Activated T-helper 1 cell treated with anti-CD3 and anti-CD28 coated beads, Interleukin-12 subunit alpha, Interleukin-12 subunit beta, Interleukin-2, Interleukin-4 antibody, amounts not matched to agents 30 ng/mL and 10 ng/mL and 1 ng/mL, durations not matched to agents 14 hours and 24 hours and 36 hours (primary cell): ENCODE measurements at regions of chr16 and their contacts with region 1.

Region 1: DNA sequence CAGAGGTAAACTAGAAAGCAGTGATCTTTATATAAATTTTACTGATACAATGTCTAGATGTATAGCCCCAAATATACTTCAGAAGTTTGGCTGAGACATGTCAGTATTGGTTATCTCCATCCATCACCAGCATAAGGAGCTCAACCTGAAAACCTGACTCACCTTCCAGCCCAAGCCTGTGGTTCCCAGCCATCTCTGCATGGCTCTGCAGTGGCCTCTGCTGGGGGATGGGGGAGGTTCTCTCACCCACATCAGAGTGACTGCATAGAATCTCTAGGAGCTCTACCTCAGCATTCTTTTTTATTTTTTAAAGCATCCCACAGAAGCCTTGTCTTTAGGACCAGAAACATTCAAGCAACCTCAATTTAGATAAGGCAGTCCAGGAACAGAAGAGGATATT is 27.3 kb downstream of the USP7 start:
- DNase-seq: peak; percentile 60
- H3K4me3 Mint-ChIP-seq: no peak overlapping the region
- H3K27ac Mint-ChIP-seq: peak overlapping the region; percentile 41
- H3K4me1 Mint-ChIP-seq: peaks cover 36% of the 10 kb centered on the region
- H3K27me3 Mint-ChIP-seq: no peaks in the 10 kb centered on the region

Region 2: DNA sequence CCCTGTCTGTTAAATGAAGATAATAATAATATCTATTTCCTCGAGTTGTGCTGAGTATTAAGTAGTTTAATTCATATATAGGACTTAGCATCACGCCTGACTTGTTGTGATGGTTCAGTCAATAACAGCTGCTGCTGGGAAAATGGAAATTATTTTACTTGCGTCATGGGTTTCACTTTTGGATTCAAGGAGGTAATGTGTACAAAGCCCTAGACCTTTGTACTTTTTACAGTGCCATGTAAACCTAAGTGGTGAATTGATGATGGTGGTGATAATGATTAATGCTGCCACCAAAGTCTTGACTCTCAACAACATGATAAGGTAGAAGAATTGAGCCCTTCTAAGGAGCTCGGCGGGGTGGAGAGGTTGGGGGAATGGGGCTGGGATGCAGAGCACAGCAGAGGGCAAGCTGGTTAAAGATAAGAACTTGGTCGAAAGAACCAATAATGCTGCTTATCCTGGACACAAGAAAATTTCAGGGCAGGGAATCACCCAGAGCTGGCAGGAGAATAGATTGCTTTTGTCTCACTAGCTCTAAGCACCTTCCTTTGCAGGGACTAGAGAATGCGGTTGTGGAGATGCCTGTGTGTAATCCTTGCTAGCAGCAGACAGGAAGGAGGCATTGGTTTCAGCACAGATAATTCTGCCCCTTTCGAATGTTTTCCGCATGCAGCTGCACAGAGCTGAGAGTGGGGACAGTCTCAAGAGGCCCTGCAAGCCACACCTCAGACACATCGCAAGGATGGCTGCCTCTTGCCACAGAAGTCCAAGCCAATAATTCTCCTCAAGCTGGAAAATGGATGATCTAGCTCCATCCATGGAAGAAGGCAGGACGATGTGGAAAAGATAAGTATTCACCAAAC is 533.2 kb before region 1 on chr16:
- intact Hi-C with region 1: no loop called
- DNase-seq: no peak
- H3K4me3 Mint-ChIP-seq: no peak overlapping the region
- H3K27ac Mint-ChIP-seq: no peak overlapping the region
- H3K4me1 Mint-ChIP-seq: no peaks in the 10 kb centered on the region
- H3K27me3 Mint-ChIP-seq: no peaks in the 10 kb centered on the region

Region 3: GRCh38 chr16:8674413-8675022 is 261.9 kb before region 1 on chr16 and contains the start of gene ABAT:
- intact Hi-C with region 1: loop called (anchors 1 kb)
- DNase-seq: peak; percentile 91
- H3K4me3 Mint-ChIP-seq: peak within 1 kb of the TSS; percentile 87
- H3K27ac Mint-ChIP-seq: peak within 1 kb of the TSS; percentile 81
- H3K4me1 Mint-ChIP-seq: peaks cover 20% of the 10 kb centered on the region
- H3K27me3 Mint-ChIP-seq: peaks cover 6% of the 10 kb centered on the region
- total RNA-seq, gene ABAT: 7.3 and 7.7 TPM in 2 replicates

Region 4: GRCh38 chr16:8905168-8905762 is 31.2 kb before region 1 on chr16:
- intact Hi-C with region 1: loop called (anchors 1 kb)
- DNase-seq: no peak
- H3K4me3 Mint-ChIP-seq: no peak overlapping the region
- H3K27ac Mint-ChIP-seq: no peak overlapping the region
- H3K4me1 Mint-ChIP-seq: peaks cover 24% of the 10 kb centered on the region
- H3K27me3 Mint-ChIP-seq: no peaks in the 10 kb centered on the region

Region 5: GRCh38 chr16:8958344-8959167 is 22.1 kb after region 1 on chr16:
- intact Hi-C with region 1: loop called (anchors 2 kb)
- DNase-seq: no peak
- H3K4me3 Mint-ChIP-seq: peak overlapping the region; percentile 69
- H3K27ac Mint-ChIP-seq: peak overlapping the region; percentile 77
- H3K4me1 Mint-ChIP-seq: peaks cover 67% of the 10 kb centered on the region
- H3K27me3 Mint-ChIP-seq: no peaks in the 10 kb centered on the region

Region 6: DNA sequence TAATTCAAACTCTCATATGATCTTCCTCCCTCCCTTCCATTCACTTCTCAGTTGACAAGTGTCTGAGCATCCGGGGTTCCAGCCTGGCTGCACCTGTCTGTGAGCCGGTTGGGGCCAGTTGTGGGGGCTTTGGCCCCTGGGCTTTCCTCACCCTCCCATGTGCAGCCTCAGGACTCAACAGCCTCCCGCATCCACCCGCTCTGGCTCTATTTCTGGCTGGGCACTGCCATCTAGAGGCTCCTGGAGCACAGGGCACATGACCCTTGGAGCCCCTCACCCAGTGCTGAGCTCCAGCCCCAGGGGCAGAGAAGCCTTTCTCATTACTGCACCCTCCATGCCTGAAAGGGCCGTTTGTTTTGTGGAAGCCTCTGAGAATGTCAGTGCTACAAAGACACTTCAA is 198.3 kb after region 1 on chr16:
- intact Hi-C with region 1: loop called (anchors 2 kb)
- DNase-seq: peak; percentile 40
- H3K4me3 Mint-ChIP-seq: no peak overlapping the region
- H3K27ac Mint-ChIP-seq: peak overlapping the region; percentile 69
- H3K4me1 Mint-ChIP-seq: peaks cover 22% of the 10 kb centered on the region
- H3K27me3 Mint-ChIP-seq: peaks cover 6% of the 10 kb centered on the region